ENCODE measurements at regions of chr5 and their contacts with region 1.

Region 1: GRCh38 chr5:143403593-143404415 is at the start of gene NR3C1:
- DNase-seq: peak; percentile 78
- ATAC-seq: peak; percentile 55
- H3K4me3 ChIP-seq: peak within 1 kb of the TSS; percentile 92
- H3K27ac ChIP-seq: peak within 1 kb of the TSS; percentile 99
- H3K4me1 ChIP-seq: peaks cover 33% of the 10 kb centered on the region
- H3K27me3 ChIP-seq: no peaks in the 10 kb centered on the region
- CTCF ChIP-seq: peak; percentile 21; the same call in 1 of the 2 replicates
- total RNA-seq, gene NR3C1: 13.0 and 14.5 TPM in 2 replicates

Region 2: DNA sequence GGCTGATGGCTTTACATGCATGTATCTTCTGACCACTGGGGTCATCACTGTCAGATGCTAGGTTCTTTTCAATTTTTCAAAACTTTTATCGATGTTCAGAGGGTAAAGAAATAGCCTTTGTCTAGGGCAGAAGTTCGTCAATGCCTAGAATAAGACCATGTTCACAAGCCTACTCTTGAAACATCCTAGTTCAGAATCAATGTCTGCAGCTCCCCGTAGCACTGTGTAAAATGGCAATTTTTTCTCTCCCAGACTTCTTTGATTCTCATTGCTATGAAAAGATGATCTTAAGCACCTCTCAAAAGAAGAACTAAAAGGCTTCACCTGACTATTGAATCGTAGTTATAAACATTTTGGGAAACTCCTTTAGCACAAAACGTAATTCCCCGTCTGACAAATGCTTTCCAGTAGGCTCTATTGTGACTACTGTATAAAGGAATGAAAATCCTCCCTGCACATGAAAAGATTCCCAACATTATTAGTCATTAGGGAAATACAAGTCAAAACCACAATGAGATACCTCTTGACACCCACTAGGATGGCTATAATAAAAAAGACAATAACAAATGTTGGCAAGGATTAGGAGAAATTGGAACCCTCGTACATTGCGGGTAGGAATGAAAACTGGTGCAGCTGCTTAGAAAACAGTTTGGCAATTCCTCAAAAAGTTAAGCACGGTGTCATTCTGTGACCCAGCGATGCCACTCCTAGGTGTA is 370.1 kb before region 1 on chr5:
- CTCF ChIA-PET with region 1: no interaction called
- POLR2A ChIA-PET with region 1: no interaction called
- intact Hi-C with region 1: loop called (anchors 5 kb)
- DNase-seq: peak; percentile 90
- ATAC-seq: peak; percentile 85
- H3K4me3 ChIP-seq: no peak overlapping the region
- H3K27ac ChIP-seq: peak overlapping the region; percentile 89
- H3K4me1 ChIP-seq: peaks cover 39% of the 10 kb centered on the region
- H3K27me3 ChIP-seq: no peaks in the 10 kb centered on the region
- CTCF ChIP-seq: no peak

Region 3: DNA sequence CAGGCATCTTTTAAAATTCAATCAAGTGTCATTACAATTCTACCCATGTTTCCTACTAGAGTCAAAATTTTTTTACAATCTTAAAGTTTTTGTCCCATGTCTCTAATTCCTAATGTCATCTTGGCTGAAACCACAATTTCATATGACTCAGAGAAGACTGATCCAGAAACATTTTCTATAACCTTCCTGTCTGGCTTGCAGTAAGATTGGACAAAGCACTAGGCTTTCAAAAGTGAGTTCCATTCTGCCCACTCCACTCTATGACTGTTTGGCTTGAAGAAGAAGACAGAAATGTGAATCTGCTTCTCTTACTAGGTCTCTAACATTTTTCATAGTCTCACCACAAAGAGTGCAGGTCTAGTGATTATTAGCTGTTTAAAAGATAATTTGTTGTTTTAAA is 89.1 kb before region 1 on chr5:
- CTCF ChIA-PET with region 1: no interaction called
- POLR2A ChIA-PET with region 1: no interaction called
- intact Hi-C with region 1: loop called (anchors 2 kb)
- DNase-seq: peak; percentile 71
- ATAC-seq: peak; percentile 42
- H3K4me3 ChIP-seq: no peak overlapping the region
- H3K27ac ChIP-seq: peak overlapping the region; percentile 89
- H3K4me1 ChIP-seq: peaks cover 81% of the 10 kb centered on the region
- H3K27me3 ChIP-seq: no peaks in the 10 kb centered on the region
- CTCF ChIP-seq: no peak

Region 4: DNA sequence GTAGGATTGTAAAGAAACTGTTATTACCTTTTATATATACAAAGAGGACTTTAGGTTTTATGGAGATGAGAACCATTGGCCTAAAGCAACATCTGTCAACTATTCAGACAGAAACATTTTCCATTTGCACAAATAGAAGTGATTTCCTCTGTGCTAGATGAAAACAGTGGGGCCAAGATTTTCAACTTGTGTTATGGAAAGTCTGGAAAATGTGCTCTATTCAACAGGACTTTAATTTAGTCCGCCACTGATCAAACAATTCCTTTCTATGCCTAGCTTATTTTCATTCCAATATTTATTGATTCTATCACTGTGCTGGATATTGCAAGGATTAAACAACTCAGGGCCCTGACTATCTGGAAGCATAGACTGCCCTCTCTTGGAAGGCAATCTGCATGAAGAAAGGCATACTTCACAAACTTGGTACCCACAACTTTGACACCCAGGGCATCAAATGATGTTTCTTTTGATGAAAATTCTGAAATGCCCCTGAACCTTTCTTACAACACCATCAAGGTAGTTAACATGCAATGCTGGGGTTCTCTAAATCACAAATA is 281.5 kb after region 1 on chr5:
- CTCF ChIA-PET with region 1: no interaction called
- POLR2A ChIA-PET with region 1: interaction called, 8 read pairs
- intact Hi-C with region 1: loop called (anchors 2 kb)
- DNase-seq: peak; percentile 25
- ATAC-seq: no peak; the same call in 1 of the 2 replicates
- H3K4me3 ChIP-seq: no peak overlapping the region
- H3K27ac ChIP-seq: no peak overlapping the region
- H3K4me1 ChIP-seq: peaks cover 14% of the 10 kb centered on the region
- H3K27me3 ChIP-seq: no peaks in the 10 kb centered on the region
- CTCF ChIP-seq: peak; percentile 58

Region 5: DNA sequence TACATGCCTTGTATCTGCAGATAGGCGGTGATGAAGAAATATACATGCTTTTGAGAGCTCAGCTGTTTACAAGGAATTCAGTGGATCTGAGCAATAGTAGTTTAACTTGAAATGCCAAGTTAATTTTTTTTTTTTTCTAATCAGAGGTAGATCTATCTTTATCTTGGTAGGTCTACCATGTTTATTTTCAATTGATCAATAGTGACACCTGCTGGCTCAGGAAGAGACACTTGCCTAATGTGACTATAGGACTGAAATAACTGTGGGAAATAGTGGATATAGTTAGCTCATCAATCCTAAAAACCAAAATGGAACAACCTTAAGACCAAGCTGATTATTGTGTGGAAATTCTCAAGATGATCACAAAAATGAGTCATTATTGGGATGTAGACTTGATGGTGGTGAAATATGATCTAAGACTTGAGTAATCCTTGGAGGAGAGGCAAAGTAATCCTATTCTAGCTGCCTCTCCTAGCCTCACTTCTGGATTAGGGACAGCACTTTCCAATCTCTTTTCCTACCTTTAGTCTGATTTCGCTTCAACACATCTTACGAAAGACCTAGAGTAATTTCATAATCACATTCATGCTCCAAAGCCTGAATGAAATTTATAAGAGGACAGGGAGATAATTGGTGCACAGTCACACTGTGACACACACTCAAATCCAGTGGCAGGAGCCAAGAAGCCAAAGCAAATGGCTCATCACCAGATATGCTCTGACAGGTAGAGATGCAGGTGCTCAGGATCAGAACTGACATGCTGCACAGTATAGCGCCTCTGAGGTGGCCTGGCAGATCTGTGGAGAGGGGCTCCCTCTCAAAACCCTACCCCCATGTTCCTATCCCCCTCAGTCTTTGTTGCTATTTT is 564.4 kb after region 1 on chr5:
- CTCF ChIA-PET with region 1: no interaction called
- POLR2A ChIA-PET with region 1: no interaction called
- intact Hi-C with region 1: loop called (anchors 2 kb)
- DNase-seq: peak; percentile 77
- ATAC-seq: peak; percentile 47
- H3K4me3 ChIP-seq: no peak overlapping the region
- H3K27ac ChIP-seq: peak overlapping the region; percentile 51
- H3K4me1 ChIP-seq: peaks cover 37% of the 10 kb centered on the region
- H3K27me3 ChIP-seq: no peaks in the 10 kb centered on the region
- CTCF ChIP-seq: peak; percentile 74

Measured in PC-3 (cell line).